HepG2 (cell line): ENCODE measurements at regions of chr13 and their contacts with region 1.

Region 1: GRCh38 chr13:30395192-30396084 is 26.9 kb upstream of the UBE2L5 start:
- DNase-seq: peak; percentile 97
- ATAC-seq: peak; percentile 83
- H3K4me3 ChIP-seq: peak overlapping the region; percentile 56 to 72 (median 59)
- H3K27ac ChIP-seq: peak overlapping the region; percentile 95
- H3K4me1 ChIP-seq: peaks cover 78% of the 10 kb centered on the region
- H3K27me3 ChIP-seq: no peaks in the 10 kb centered on the region
- CTCF ChIP-seq: no peak
- EP300 ChIP-seq: peak; percentile 77 to 82
- POLR2A ChIP-seq: peak; percentile 27 to 51; a peak in 3 of 4 replicates
- RAD21 ChIP-seq: no peak

Region 2: GRCh38 chr13:30276178-30276577 is 119.3 kb before region 1 on chr13:
- CTCF ChIA-PET with region 1: no interaction called
- POLR2A ChIA-PET with region 1: no interaction called
- in situ Hi-C with region 1: no loop called
- intact Hi-C with region 1: no loop called
- DNase-seq: no peak
- ATAC-seq: no peak
- H3K4me3 ChIP-seq: no peak overlapping the region
- H3K27ac ChIP-seq: no peak overlapping the region
- H3K4me1 ChIP-seq: no peaks in the 10 kb centered on the region
- H3K27me3 ChIP-seq: no peaks in the 10 kb centered on the region
- CTCF ChIP-seq: no peak
- EP300 ChIP-seq: no peak
- POLR2A ChIP-seq: no peak
- RAD21 ChIP-seq: no peak

Region 3: DNA sequence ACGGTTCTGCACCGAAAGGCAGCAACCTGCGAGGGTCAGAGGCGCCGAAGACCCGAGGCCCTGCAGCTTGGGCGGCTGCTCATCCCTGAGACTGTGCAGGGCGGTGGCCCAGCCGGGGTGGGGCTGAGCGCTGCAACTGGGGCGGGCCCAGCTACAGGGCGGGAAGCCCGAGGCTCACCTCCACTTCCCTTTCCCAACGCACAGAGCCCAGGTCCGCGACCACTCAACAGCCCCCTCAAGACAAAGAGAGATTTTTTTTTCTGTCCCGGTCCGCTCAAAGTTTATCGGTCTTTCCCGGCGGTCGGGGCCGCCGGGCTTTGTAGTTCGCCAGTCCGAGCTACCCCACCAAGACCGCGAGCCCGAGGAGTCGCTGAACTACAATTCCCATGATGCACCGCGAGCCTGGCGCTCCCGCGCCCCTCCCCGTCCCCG is 88.7 kb before region 1 on chr13:
- CTCF ChIA-PET with region 1: no interaction called
- POLR2A ChIA-PET with region 1: interaction called, 10 read pairs
- in situ Hi-C with region 1: no loop called
- intact Hi-C with region 1: no loop called
- DNase-seq: peak; percentile 87
- ATAC-seq: peak; percentile 91
- H3K4me3 ChIP-seq: peak overlapping the region; percentile 81 to 93 (median 88)
- H3K27ac ChIP-seq: peak overlapping the region; percentile 90
- H3K4me1 ChIP-seq: peaks cover 51% of the 10 kb centered on the region
- H3K27me3 ChIP-seq: no peaks in the 10 kb centered on the region; a peak in 1 of 5 replicates
- CTCF ChIP-seq: no peak
- EP300 ChIP-seq: no peak
- POLR2A ChIP-seq: peak; percentile 34 to 51; a peak in 2 of 4 replicates
- RAD21 ChIP-seq: no peak

Region 4: GRCh38 chr13:30329009-30329585 is 66.3 kb before region 1 on chr13:
- CTCF ChIA-PET with region 1: no interaction called
- POLR2A ChIA-PET with region 1: no interaction called
- in situ Hi-C with region 1: no loop called
- intact Hi-C with region 1: no loop called
- DNase-seq: no peak
- ATAC-seq: no peak
- H3K4me3 ChIP-seq: no peak overlapping the region
- H3K27ac ChIP-seq: no peak overlapping the region
- H3K4me1 ChIP-seq: peaks cover 4% of the 10 kb centered on the region; the same call in 1 of the 2 replicates
- H3K27me3 ChIP-seq: no peaks in the 10 kb centered on the region; a peak in 1 of 5 replicates
- CTCF ChIP-seq: no peak
- EP300 ChIP-seq: no peak
- POLR2A ChIP-seq: no peak
- RAD21 ChIP-seq: no peak

Region 5: GRCh38 chr13:30355384-30355699 is 40.1 kb before region 1 on chr13:
- CTCF ChIA-PET with region 1: no interaction called
- POLR2A ChIA-PET with region 1: no interaction called
- in situ Hi-C with region 1: no loop called
- intact Hi-C with region 1: loop called (anchors 5 kb)
- DNase-seq: peak; percentile 49
- ATAC-seq: peak; percentile 99
- H3K4me3 ChIP-seq: no peak overlapping the region; a peak in 1 of 6 replicates
- H3K27ac ChIP-seq: no peak overlapping the region
- H3K4me1 ChIP-seq: peaks cover 10% of the 10 kb centered on the region
- H3K27me3 ChIP-seq: peaks cover 0 to 2% of the 10 kb centered on the region in 2 experiments; a peak in 1 of 5 replicates
- CTCF ChIP-seq: peak; percentile 80
- EP300 ChIP-seq: no peak
- POLR2A ChIP-seq: no peak
- RAD21 ChIP-seq: peak; percentile 60

Region 6: GRCh38 chr13:30408319-30409101 is 13.1 kb after region 1 on chr13:
- CTCF ChIA-PET with region 1: interaction called, 5 read pairs
- POLR2A ChIA-PET with region 1: interaction called, 16 read pairs
- in situ Hi-C with region 1: no loop called
- intact Hi-C with region 1: loop called (anchors 1 kb)
- DNase-seq: peak; percentile 86
- ATAC-seq: peak; percentile 97
- H3K4me3 ChIP-seq: peak overlapping the region in 2 of 3 experiments; percentile 34 to 61; a peak in 2 of 6 replicates
- H3K27ac ChIP-seq: no peak overlapping the region
- H3K4me1 ChIP-seq: peaks cover 36% of the 10 kb centered on the region
- H3K27me3 ChIP-seq: peaks cover 1 to 26% of the 10 kb centered on the region in 2 experiments; a peak in 3 of 5 replicates
- CTCF ChIP-seq: peak; percentile 80
- EP300 ChIP-seq: no peak
- POLR2A ChIP-seq: no peak
- RAD21 ChIP-seq: peak; percentile 47; the same call in 1 of the 2 replicates

Region 7: GRCh38 chr13:30978981-30979956 is 583.8 kb after region 1 on chr13:
- CTCF ChIA-PET with region 1: no interaction called
- POLR2A ChIA-PET with region 1: no interaction called
- in situ Hi-C with region 1: no loop called
- intact Hi-C with region 1: no loop called
- DNase-seq: peak; percentile 16
- ATAC-seq: peak; percentile 87
- H3K4me3 ChIP-seq: no peak overlapping the region
- H3K27ac ChIP-seq: no peak overlapping the region
- H3K4me1 ChIP-seq: peaks cover 7% of the 10 kb centered on the region; the same call in 1 of the 2 replicates
- H3K27me3 ChIP-seq: no peaks in the 10 kb centered on the region
- CTCF ChIP-seq: peak; percentile 75
- EP300 ChIP-seq: no peak
- POLR2A ChIP-seq: no peak
- RAD21 ChIP-seq: 0 out of 2 replicates have a peak, but pooled peaks have one; percentile 8

Region 8: GRCh38 chr13:31056644-31057271 is 661.3 kb after region 1 on chr13:
- CTCF ChIA-PET with region 1: no interaction called
- POLR2A ChIA-PET with region 1: no interaction called
- in situ Hi-C with region 1: no loop called
- intact Hi-C with region 1: no loop called
- DNase-seq: no peak
- ATAC-seq: no peak
- H3K4me3 ChIP-seq: no peak overlapping the region
- H3K27ac ChIP-seq: no peak overlapping the region
- H3K4me1 ChIP-seq: no peaks in the 10 kb centered on the region
- H3K27me3 ChIP-seq: peaks cover 0 to 7% of the 10 kb centered on the region in 2 experiments; a peak in 3 of 5 replicates
- CTCF ChIP-seq: no peak
- EP300 ChIP-seq: no peak
- POLR2A ChIP-seq: no peak
- RAD21 ChIP-seq: no peak

Region 9: GRCh38 chr13:31161828-31162590 is 766.6 kb after region 1 on chr13 and contains the start of gene HSPH1:
- CTCF ChIA-PET with region 1: no interaction called
- POLR2A ChIA-PET with region 1: no interaction called
- in situ Hi-C with region 1: no loop called
- intact Hi-C with region 1: loop called (anchors 10 kb)
- DNase-seq: peak; percentile 96
- ATAC-seq: peak; percentile 94
- H3K4me3 ChIP-seq: peak within 1 kb of the TSS; percentile 91 to 94 (median 94)
- H3K27ac ChIP-seq: peak within 1 kb of the TSS; percentile 78
- H3K4me1 ChIP-seq: peaks cover 50% of the 10 kb centered on the region
- H3K27me3 ChIP-seq: no peaks in the 10 kb centered on the region; a peak in 1 of 5 replicates
- CTCF ChIP-seq: no peak
- EP300 ChIP-seq: peak in 1 of 2 experiments; percentile 74; a peak in 2 of 4 replicates
- POLR2A ChIP-seq: peak; percentile 86 to 87
- RAD21 ChIP-seq: no peak
- total RNA-seq, gene HSPH1: 62.9 and 131 TPM in 2 replicates